Psoas muscle (tissue), 8 donors: ENCODE measurements at regions of chr5 and their contacts with region 1.

Region 1: GRCh38 chr5:71782771-71783770 is 64.0 kb downstream of the CARTPT start:
- DNase-seq: peak; percentile 76 to 86
- ATAC-seq: peak; percentile 61 to 95 (median 76)
- H3K4me3 ChIP-seq: peak overlapping the region; percentile 54
- H3K27ac ChIP-seq: no peak overlapping the region
- H3K4me1 ChIP-seq: peaks cover 5% of the 10 kb centered on the region
- H3K27me3 ChIP-seq: no peaks in the 10 kb centered on the region
- CTCF ChIP-seq: peak; percentile 64

Region 2: DNA sequence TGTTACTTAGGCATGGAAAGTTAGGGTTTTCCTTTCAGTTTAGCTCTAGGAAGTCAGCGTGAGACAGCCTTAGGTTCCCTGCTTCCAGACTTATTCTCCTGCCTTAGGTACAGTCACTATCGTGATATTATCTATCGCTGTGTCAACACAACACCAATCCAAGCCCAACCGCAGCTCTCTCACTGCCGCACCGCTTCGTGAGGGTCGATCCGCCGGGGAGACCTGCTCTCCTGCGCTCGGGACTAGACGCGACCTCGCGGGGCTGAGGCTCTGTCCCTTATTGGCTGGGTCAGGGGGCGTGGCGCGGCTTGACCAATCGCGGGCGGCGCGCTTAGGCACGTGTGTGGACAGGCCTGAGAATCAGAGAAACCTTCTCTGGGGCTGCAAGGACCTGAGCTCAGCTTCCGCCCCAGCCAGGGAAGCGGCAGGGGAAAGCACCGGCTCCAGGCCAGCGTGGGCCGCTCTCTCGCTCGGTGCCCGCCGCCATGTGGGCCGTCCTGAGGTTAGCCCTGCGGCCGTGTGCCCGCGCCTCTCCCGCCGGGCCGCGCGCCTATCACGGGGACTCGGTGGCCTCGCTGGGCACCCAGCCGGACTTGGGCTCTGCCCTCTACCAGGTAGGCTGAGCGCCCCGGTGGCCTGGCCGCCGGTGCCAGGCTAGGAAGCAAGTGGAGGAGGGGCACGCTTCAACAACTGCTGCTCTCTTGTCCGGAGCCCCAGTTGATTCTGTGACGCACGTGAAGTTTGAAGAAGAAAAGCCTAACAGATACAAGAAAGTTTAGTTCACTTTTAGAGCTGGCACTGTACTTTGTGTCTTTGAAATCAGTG is 195.9 kb before region 1 on chr5 and contains the start of gene MCCC2:
- intact Hi-C with region 1: no loop called
- DNase-seq: peak; percentile 98
- ATAC-seq: peak; percentile 100
- H3K4me3 ChIP-seq: peak within 1 kb of the TSS; percentile 87
- H3K27ac ChIP-seq: peak within 1 kb of the TSS; percentile 85
- H3K4me1 ChIP-seq: peaks cover 14% of the 10 kb centered on the region
- H3K27me3 ChIP-seq: no peaks in the 10 kb centered on the region
- CTCF ChIP-seq: no peak
- total RNA-seq, gene MCCC2: 34.5 to 44.0 (median 40.8) TPM

Region 3: DNA sequence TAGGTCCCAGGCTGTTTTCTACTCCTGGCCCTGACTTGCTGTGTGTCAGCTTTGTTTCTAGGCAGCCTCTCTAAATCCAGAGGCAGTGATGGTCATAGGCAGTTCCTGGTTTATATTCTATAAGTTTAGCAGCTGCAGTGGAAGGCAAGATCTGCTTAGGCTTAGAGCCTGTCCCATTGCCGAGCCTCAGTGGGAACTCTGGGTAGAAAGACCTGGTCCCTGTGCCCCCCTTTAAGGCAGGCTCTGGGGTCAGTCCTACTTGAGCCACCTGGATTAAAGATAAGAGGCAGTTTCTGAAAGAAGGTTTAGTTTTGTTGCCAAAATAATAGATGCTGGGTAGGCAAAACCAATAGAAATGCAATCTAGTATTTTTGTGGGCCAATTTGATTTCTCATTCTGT is 182.3 kb before region 1 on chr5:
- intact Hi-C with region 1: no loop called
- DNase-seq: no peak
- ATAC-seq: no peak
- H3K4me3 ChIP-seq: no peak overlapping the region
- H3K27ac ChIP-seq: no peak overlapping the region
- H3K4me1 ChIP-seq: no peaks in the 10 kb centered on the region
- H3K27me3 ChIP-seq: no peaks in the 10 kb centered on the region
- CTCF ChIP-seq: no peak

Region 4: GRCh38 chr5:72018146-72018803 is 235.2 kb after region 1 on chr5:
- intact Hi-C with region 1: loop called in 1 of 2 experiments (anchors 10 kb)
- DNase-seq: peak in 1 of 2 donors; percentile 24
- ATAC-seq: no peak
- H3K4me3 ChIP-seq: no peak overlapping the region
- H3K27ac ChIP-seq: no peak overlapping the region
- H3K4me1 ChIP-seq: no peaks in the 10 kb centered on the region
- H3K27me3 ChIP-seq: peaks cover 0 to 2% (median 0%) of the 10 kb centered on the region in 3 donors
- CTCF ChIP-seq: peak; percentile 72

Region 5: DNA sequence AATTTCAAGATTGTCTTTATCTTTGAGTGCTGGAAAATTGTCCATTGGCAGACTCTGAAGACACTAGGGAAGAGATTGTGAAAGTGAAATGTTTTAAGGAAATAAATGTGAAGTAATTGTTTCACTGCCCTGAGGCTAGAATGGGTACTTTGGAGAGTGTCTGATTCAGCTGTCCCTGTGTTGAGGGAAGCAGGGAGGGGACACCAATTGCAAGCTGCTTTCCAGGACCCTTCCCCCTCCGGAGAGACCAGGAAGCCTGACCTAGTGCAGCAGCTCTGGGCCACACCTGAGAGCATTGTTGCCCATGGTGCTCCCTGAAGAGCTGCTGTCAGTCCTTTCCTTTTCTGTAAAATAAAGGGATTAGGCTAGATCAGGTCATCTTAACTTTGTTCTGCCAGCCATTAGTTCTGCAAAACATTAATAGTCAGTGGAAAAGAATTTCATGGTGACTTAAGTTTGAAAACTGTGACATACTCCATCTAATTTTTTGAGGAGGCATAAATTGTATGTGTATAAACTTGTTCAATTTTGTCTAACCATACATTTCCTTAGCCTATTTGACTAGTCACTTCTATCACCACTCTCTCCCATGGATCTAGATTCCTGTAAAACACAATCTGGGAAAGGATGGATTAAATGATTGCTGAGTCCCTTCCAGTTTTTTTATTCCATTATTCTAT is 343.0 kb after region 1 on chr5:
- intact Hi-C with region 1: loop called in 1 of 2 experiments (anchors 10 kb)
- DNase-seq: no peak
- ATAC-seq: peak in 1 of 4 donors; percentile 45
- H3K4me3 ChIP-seq: no peak overlapping the region
- H3K27ac ChIP-seq: no peak overlapping the region
- H3K4me1 ChIP-seq: no peaks in the 10 kb centered on the region
- H3K27me3 ChIP-seq: peaks cover 0 to 4% (median 0%) of the 10 kb centered on the region in 3 donors
- CTCF ChIP-seq: no peak

Region 6: GRCh38 chr5:72307968-72308852 is 525.1 kb after region 1 on chr5:
- intact Hi-C with region 1: loop called (anchors 1 to 5 kb)
- DNase-seq: peak; percentile 97 to 99
- ATAC-seq: peak; percentile 98 to 99 (median 99)
- H3K4me3 ChIP-seq: peak overlapping the region; percentile 85
- H3K27ac ChIP-seq: peak overlapping the region; percentile 97
- H3K4me1 ChIP-seq: peaks cover 7% of the 10 kb centered on the region
- H3K27me3 ChIP-seq: no peaks in the 10 kb centered on the region
- CTCF ChIP-seq: peak; percentile 88